SK-N-SH (cell line): ENCODE measurements at regions of chr14 and their contacts with region 1.

Region 1: GRCh38 chr14:87615822-87616679 is 376.9 kb downstream of the GALC start:
- DNase-seq: peak; percentile 38
- H3K4me3 ChIP-seq: no peak overlapping the region
- H3K27ac ChIP-seq: no peak overlapping the region
- H3K4me1 ChIP-seq: no peaks in the 10 kb centered on the region
- H3K27me3 ChIP-seq: no peaks in the 10 kb centered on the region
- CTCF ChIP-seq: peak; percentile 60
- EP300 ChIP-seq: no peak
- RAD21 ChIP-seq: peak; percentile 67

Region 2: GRCh38 chr14:87600240-87600639 is 15.8 kb before region 1 on chr14:
- CTCF ChIA-PET with region 1: interaction called, 13 read pairs
- POLR2A ChIA-PET with region 1: no interaction called
- DNase-seq: no peak
- H3K4me3 ChIP-seq: no peak overlapping the region
- H3K27ac ChIP-seq: no peak overlapping the region
- H3K4me1 ChIP-seq: no peaks in the 10 kb centered on the region
- H3K27me3 ChIP-seq: no peaks in the 10 kb centered on the region
- CTCF ChIP-seq: no peak
- EP300 ChIP-seq: no peak
- RAD21 ChIP-seq: no peak

Region 3: DNA sequence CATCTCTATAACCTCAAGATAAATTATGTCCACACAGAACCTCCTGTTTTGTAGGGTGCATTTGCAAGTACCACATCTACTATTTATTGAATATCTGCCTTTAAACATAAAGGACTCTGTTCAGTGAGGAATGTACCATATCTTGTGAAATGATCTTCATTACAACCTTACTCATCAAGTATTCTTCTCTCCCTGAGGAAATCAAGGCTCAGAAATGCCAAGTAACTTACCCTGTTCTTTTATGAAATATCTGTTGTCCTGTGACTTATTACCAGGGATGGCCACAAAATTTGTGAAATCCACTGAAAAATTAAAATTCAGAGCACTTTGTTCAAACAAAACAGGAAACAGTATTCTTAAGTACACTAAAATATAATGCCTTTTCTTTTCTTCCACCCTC is 10.2 kb after region 1 on chr14:
- CTCF ChIA-PET with region 1: interaction called, 11 read pairs
- POLR2A ChIA-PET with region 1: no interaction called
- DNase-seq: no peak
- H3K4me3 ChIP-seq: no peak overlapping the region
- H3K27ac ChIP-seq: no peak overlapping the region
- H3K4me1 ChIP-seq: no peaks in the 10 kb centered on the region
- H3K27me3 ChIP-seq: no peaks in the 10 kb centered on the region
- CTCF ChIP-seq: no peak
- EP300 ChIP-seq: no peak
- RAD21 ChIP-seq: no peak

Region 4: GRCh38 chr14:87638196-87638595 is 22.1 kb after region 1 on chr14:
- CTCF ChIA-PET with region 1: interaction called, 17 read pairs
- POLR2A ChIA-PET with region 1: no interaction called
- DNase-seq: no peak
- H3K4me3 ChIP-seq: no peak overlapping the region
- H3K27ac ChIP-seq: no peak overlapping the region
- H3K4me1 ChIP-seq: no peaks in the 10 kb centered on the region
- H3K27me3 ChIP-seq: no peaks in the 10 kb centered on the region
- CTCF ChIP-seq: no peak
- EP300 ChIP-seq: no peak
- RAD21 ChIP-seq: no peak